HepG2 (cell line): ENCODE measurements at regions of chr3 and their contacts with region 1.

Region 1: GRCh38 chr3:100073899-100074307 is 40.4 kb downstream of the FILIP1L start:
- DNase-seq: no peak
- ATAC-seq: no peak
- H3K4me3 ChIP-seq: no peak overlapping the region
- H3K27ac ChIP-seq: peak overlapping the region; percentile 97
- H3K4me1 ChIP-seq: peaks cover 92% of the 10 kb centered on the region
- H3K27me3 ChIP-seq: no peaks in the 10 kb centered on the region
- CTCF ChIP-seq: no peak
- EP300 ChIP-seq: no peak
- POLR2A ChIP-seq: no peak
- RAD21 ChIP-seq: no peak

Region 2: GRCh38 chr3:99901200-99901926 is 172.5 kb before region 1 on chr3:
- CTCF ChIA-PET with region 1: no interaction called
- POLR2A ChIA-PET with region 1: interaction called, 12 read pairs
- in situ Hi-C with region 1: no loop called
- intact Hi-C with region 1: no loop called
- DNase-seq: peak; percentile 94
- ATAC-seq: peak; percentile 98
- H3K4me3 ChIP-seq: peak overlapping the region in 1 of 3 experiments; percentile 32; a peak in 1 of 6 replicates
- H3K27ac ChIP-seq: peak overlapping the region; percentile 73
- H3K4me1 ChIP-seq: peaks cover 80% of the 10 kb centered on the region
- H3K27me3 ChIP-seq: no peaks in the 10 kb centered on the region
- CTCF ChIP-seq: no peak
- EP300 ChIP-seq: peak in 1 of 2 experiments; percentile 90; a peak in 2 of 4 replicates
- POLR2A ChIP-seq: no peak
- RAD21 ChIP-seq: no peak

Region 3: DNA sequence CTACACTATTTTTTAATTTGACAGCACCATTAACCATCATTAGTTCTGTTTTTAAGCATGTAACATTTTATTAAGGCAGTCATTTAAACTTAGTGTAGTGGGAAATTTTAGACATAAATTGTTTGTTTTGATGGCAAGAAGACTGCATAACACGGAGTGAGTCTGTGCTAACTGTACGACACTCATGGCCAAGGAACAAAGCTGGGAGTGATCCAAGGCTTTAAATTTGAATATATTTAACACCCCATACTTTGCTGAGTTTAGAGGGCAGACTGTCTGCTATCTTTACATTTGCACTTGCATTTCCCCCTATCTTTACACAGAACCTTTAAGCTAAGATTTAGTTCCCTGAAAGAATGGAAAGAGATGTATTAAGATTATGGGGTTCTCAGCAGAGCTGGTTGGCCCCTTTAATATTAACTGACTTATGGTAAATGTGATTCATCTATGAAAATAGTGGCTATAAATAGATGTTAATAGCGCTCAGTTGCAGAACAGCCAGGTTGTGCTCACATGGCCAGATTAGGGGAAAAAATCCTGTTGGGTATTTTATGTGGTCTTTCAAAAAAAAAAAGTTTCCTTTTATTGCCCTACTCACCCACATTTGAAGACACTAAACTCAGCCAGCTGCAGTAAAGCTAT is 135.5 kb before region 1 on chr3:
- CTCF ChIA-PET with region 1: no interaction called
- POLR2A ChIA-PET with region 1: no interaction called
- in situ Hi-C with region 1: no loop called
- intact Hi-C with region 1: loop called (anchors 5 kb)
- DNase-seq: no peak
- ATAC-seq: no peak
- H3K4me3 ChIP-seq: no peak overlapping the region
- H3K27ac ChIP-seq: no peak overlapping the region
- H3K4me1 ChIP-seq: peaks cover 57% of the 10 kb centered on the region
- H3K27me3 ChIP-seq: no peaks in the 10 kb centered on the region
- CTCF ChIP-seq: no peak
- EP300 ChIP-seq: no peak
- POLR2A ChIP-seq: no peak
- RAD21 ChIP-seq: no peak

Region 4: DNA sequence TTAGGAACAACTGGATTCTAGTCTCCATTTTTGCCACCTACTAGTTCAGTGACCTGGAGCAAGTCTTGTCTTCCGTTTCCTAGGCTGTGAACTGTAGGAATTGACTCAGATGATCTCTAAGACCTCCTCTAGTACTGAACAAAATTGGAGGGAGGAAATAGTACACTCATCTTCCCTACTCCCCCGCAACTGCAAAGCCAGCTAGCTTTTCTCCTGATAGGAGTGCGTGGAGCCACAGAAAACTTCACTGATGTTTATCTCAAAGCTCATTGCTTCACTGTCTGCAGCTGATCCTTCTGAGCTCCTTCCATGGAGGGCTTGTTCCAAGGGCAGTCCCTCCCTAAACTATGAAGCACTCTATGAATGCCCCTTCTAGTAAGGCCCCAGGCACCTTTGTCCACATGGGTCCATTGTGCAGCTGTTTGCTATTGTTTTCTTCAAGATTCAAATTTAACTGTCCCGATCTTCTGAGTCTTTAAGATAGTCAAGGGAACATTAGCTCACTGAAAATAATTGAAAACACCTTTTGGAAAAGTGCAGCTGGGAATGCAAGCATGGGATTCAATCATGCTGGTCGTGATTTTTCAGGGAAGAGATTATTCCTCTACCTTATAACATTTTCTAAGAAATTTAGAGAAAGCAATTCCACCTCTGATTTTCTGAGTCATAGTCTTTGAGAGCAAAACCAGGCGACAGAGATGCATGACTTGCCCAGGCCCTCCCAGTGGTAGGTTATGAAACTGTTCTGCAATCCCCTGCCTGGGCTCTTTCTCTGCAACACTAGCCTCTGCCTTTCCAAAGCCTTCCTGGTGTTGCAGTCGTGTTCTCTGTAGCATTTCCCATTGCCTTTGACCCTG is 16.1 kb after region 1 on chr3:
- CTCF ChIA-PET with region 1: interaction called, 11 read pairs
- POLR2A ChIA-PET with region 1: interaction called, 53 read pairs
- in situ Hi-C with region 1: no loop called
- intact Hi-C with region 1: loop called (anchors 1 kb)
- DNase-seq: peak; percentile 67
- ATAC-seq: peak; percentile 99
- H3K4me3 ChIP-seq: no peak overlapping the region
- H3K27ac ChIP-seq: peak overlapping the region; percentile 60
- H3K4me1 ChIP-seq: peaks cover 46% of the 10 kb centered on the region
- H3K27me3 ChIP-seq: no peaks in the 10 kb centered on the region
- CTCF ChIP-seq: peak; percentile 61
- EP300 ChIP-seq: no peak
- POLR2A ChIP-seq: no peak
- RAD21 ChIP-seq: peak; percentile 61

Region 5: GRCh38 chr3:100179692-100180349 is 105.9 kb after region 1 on chr3:
- CTCF ChIA-PET with region 1: no interaction called
- POLR2A ChIA-PET with region 1: no interaction called
- in situ Hi-C with region 1: no loop called
- intact Hi-C with region 1: no loop called
- DNase-seq: no peak
- ATAC-seq: no peak
- H3K4me3 ChIP-seq: no peak overlapping the region
- H3K27ac ChIP-seq: no peak overlapping the region
- H3K4me1 ChIP-seq: no peaks in the 10 kb centered on the region
- H3K27me3 ChIP-seq: no peaks in the 10 kb centered on the region
- CTCF ChIP-seq: no peak
- EP300 ChIP-seq: no peak
- POLR2A ChIP-seq: no peak
- RAD21 ChIP-seq: no peak

Region 6: GRCh38 chr3:100254168-100254777 is 180.4 kb after region 1 on chr3:
- CTCF ChIA-PET with region 1: interaction called, 17 read pairs
- POLR2A ChIA-PET with region 1: interaction called, 11 read pairs
- in situ Hi-C with region 1: loop called (anchors 5 kb)
- intact Hi-C with region 1: no loop called
- DNase-seq: peak; percentile 68
- ATAC-seq: peak; percentile 97
- H3K4me3 ChIP-seq: no peak overlapping the region
- H3K27ac ChIP-seq: no peak overlapping the region
- H3K4me1 ChIP-seq: peaks cover 49% of the 10 kb centered on the region
- H3K27me3 ChIP-seq: no peaks in the 10 kb centered on the region
- CTCF ChIP-seq: peak; percentile 89
- EP300 ChIP-seq: no peak; a peak in 1 of 4 replicates
- POLR2A ChIP-seq: no peak
- RAD21 ChIP-seq: peak; percentile 94

Region 7: DNA sequence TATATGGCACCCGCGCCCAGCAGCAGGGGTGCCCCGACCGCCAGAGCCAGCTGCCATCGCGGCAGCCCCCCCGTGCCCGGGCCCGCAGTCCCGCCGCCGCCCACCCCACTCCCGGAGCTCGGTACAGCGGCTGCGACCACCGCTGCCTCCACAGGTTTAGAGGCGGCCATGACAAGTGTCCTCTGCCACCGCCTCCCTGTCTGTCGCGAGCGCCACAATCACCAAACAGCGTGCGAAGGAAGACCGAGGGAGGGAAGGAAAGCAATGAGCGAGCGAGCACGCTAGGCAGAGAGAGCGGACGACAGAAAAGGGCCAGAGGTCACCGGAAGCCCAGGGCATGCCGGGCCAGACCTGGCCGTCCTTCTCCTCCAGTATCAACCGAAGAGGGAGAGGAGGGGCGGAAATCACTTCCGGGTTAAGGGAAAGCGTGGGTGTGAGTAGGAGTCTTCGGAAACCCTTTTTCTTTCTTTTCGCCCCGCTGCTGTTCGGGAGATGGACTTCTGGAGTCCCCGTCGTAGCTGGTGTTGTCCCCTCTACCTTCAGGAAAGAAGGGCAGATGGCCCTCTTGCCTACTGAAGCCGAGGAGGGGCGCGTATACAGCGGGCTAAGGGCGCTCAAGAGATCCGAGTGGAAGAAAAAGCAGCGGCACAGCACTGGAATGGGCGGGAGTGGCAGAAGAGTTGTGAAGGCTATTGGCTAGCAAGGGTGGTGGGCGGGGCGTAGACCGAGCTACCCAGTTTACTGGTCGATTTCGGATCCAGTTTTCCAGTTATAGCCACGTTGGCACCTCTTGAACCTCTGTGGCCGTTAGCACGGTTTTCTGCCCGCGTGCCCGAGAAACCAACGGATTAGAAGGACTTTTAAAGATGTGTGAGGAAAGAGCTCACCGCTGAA is 327.1 kb after region 1 on chr3 and contains the starts of genes LNP1 and TOMM70:
- CTCF ChIA-PET with region 1: no interaction called
- POLR2A ChIA-PET with region 1: no interaction called
- in situ Hi-C with region 1: no loop called
- intact Hi-C with region 1: loop called (anchors 10 kb)
- DNase-seq: peak; percentile 96
- ATAC-seq: peak; percentile 96
- H3K4me3 ChIP-seq: peak within 1 kb of the TSS; percentile 92 to 99 (median 96)
- H3K27ac ChIP-seq: peak within 1 kb of the TSS; percentile 93
- H3K4me1 ChIP-seq: peaks cover 57% of the 10 kb centered on the region
- H3K27me3 ChIP-seq: no peaks in the 10 kb centered on the region; a peak in 1 of 5 replicates
- CTCF ChIP-seq: no peak
- EP300 ChIP-seq: no peak
- POLR2A ChIP-seq: peak; percentile 89 to 98
- RAD21 ChIP-seq: peak; percentile 15; the same call in 1 of the 2 replicates
- total RNA-seq, gene LNP1: 6.0 and 7.0 TPM in 2 replicates
- total RNA-seq, gene TOMM70: 77.2 and 95.2 TPM in 2 replicates